ENCODE measurements at regions of chr10 and their contacts with region 1.

Region 1: DNA sequence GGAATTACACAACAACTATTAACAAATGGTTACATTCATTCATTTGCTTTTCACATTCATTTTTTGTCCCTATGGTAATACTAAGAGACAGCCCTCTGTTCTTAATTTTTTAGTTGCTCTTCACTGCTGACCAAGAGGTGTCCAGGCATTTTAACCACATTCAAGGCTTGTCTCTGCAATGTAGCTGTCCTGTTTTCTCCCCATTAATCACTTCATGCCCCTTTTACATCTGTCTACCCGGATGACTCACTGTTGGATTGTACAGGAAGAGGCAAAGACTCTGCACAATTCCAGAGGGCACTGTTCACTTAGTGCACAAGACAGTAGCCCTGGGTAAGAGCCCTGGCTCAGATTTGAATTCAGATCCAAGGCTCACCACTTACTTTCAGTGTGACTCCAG is 168.5 kb downstream of the NOC3L start:
- DNase-seq: no peak
- H3K4me3 ChIP-seq: no peak overlapping the region
- H3K27ac ChIP-seq: peak overlapping the region; percentile 52 to 74 (median 68)
- H3K4me1 ChIP-seq: peaks cover 4 to 43% (median 35%) of the 10 kb centered on the region in 4 donors
- H3K27me3 ChIP-seq: no peaks in the 10 kb centered on the region
- CTCF ChIP-seq: no peak
- EP300 ChIP-seq: no peak
- POLR2A ChIP-seq: no peak

Region 2: DNA sequence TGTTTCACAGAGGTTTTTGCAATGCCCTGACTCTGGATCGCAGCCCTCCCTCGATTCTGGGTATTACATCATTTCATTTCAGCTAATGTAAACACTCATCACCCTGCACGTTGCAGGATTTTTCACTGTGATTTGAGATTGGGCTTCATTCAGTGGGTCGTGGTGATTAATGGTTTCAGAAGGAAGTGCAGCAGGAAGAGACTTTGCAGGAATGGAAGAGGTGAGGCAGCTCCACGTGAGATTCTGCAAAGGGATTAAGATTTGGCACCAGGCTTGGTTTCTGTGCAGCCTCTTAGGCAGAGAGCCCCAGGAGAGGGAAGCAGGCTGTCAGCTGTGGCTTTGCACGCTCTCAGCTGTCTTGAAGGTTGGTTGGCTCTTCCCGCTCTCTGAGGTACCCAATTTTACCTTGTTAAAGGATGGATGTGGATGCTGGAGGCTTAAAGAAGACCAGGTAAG is 105.3 kb before region 1 on chr10:
- intact Hi-C with region 1: loop called (anchors 10 kb)
- DNase-seq: peak; percentile 88
- H3K4me3 ChIP-seq: peak overlapping the region; percentile 30 to 43 (median 38)
- H3K27ac ChIP-seq: peak overlapping the region; percentile 17 to 33 (median 28)
- H3K4me1 ChIP-seq: peaks cover 24 to 89% (median 85%) of the 10 kb centered on the region in 4 donors
- H3K27me3 ChIP-seq: no peaks in the 10 kb centered on the region
- CTCF ChIP-seq: no peak
- EP300 ChIP-seq: no peak
- POLR2A ChIP-seq: no peak

Region 3: DNA sequence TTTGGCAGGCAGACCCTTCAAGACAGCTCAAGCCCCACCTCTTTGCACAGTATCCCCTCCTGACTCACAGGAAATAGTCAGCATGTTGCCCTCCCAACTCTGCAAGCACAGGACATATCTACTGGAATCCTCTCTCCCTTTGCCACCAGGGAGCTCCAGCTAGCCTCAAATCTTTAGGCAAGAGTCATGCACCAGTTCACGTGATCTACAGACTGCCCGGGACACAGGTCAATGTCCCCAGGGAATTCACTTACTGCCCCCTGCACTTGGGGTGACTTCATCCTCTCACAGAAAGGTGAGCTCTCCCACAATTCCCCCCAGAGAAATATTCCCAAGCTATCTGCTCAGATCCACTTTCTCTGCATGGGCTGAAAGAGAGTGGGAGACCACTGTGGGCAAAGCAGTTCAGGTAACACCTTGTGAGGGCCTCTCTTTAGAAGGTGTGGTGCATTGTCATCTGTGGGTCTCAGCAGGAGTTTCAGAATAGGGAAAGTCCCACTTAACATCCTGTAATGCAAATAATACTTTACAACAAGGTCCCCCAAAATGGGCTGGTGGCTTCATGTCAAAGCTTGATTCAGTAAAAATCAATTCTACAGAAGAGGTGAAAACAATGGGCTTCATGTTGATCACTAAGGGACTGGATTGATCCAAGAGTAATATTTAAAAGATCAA is 38.6 kb after region 1 on chr10:
- intact Hi-C with region 1: no loop called
- DNase-seq: no peak
- H3K4me3 ChIP-seq: no peak overlapping the region
- H3K27ac ChIP-seq: no peak overlapping the region
- H3K4me1 ChIP-seq: no peaks in the 10 kb centered on the region
- H3K27me3 ChIP-seq: no peaks in the 10 kb centered on the region
- CTCF ChIP-seq: no peak
- EP300 ChIP-seq: no peak
- POLR2A ChIP-seq: no peak

Measured in esophagus muscularis mucosa (tissue), 4 donors.